Psoas muscle (tissue), 8 donors: ENCODE measurements at regions of chr6 and their contacts with region 1.

Region 1: DNA sequence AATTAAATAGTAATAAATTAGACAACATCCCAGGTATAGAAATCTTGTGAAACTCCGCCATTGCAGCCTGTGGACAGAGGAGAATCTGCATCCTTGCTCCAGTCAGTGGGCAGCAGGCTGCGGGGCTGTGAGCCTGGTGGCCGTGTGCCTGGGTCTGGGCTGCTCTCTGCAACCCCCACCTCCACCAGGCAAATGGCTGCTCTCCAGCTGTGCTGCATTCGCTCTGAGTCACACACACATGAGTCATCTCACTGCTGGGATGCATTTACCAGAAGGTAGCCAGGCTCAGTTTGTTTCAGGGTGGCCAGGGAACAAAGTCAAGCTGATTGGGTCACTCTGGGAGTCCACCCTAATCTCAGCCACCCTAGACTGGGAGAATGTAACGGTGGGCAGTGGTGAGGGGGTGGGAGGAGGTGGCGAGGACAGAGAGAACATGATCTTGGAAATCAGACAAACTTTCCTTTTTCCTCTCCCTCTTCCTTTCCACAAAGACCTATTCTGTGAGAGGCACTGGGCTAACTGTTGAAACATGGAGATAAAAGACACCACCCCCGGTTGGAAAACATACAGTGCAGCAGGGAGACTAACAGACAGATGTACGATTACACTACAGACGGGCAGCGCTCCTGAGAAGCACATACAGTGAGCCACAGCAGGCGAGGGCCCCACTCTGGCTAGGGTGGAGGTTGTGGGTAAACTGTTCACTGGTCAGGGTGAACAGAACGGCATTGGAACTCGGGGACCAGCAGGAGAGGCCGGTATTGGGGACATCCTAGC is 59.2 kb downstream of the TRAM2 start:
- DNase-seq: peak; percentile 86 to 90
- ATAC-seq: peak; percentile 96 to 98 (median 97)
- H3K4me3 ChIP-seq: no peak overlapping the region
- H3K27ac ChIP-seq: peak overlapping the region; percentile 86
- H3K4me1 ChIP-seq: peaks cover 27% of the 10 kb centered on the region
- H3K27me3 ChIP-seq: no peaks in the 10 kb centered on the region
- CTCF ChIP-seq: no peak

Region 2: GRCh38 chr6:52474173-52474572 is 43.5 kb before region 1 on chr6:
- intact Hi-C with region 1: no loop called
- DNase-seq: no peak
- ATAC-seq: no peak
- H3K4me3 ChIP-seq: no peak overlapping the region
- H3K27ac ChIP-seq: no peak overlapping the region
- H3K4me1 ChIP-seq: no peaks in the 10 kb centered on the region
- H3K27me3 ChIP-seq: no peaks in the 10 kb centered on the region
- CTCF ChIP-seq: no peak

Region 3: DNA sequence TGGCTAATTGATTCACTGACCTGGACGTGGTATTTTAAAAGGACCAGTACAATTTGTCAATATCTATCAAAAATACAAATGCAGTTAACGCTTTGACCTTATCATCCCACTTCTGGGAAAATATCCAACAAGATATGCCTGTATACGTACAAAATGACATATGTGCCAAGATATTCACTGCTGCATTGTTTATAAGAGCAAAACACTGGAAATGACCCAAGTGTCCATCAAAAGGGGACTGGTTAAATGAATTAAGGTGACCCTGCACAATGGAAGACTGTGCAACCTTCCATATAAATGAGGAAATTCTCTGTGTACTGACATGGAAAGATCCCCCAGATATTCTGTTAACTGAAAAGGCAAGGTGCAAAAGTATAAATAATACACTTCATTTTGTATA is 45.2 kb after region 1 on chr6:
- intact Hi-C with region 1: no loop called
- DNase-seq: no peak
- ATAC-seq: no peak
- H3K4me3 ChIP-seq: no peak overlapping the region
- H3K27ac ChIP-seq: no peak overlapping the region
- H3K4me1 ChIP-seq: peaks cover 21% of the 10 kb centered on the region
- H3K27me3 ChIP-seq: no peaks in the 10 kb centered on the region
- CTCF ChIP-seq: no peak

Region 4: GRCh38 chr6:52577022-52577777 is 59.5 kb after region 1 on chr6 and contains the start of gene TRAM2:
- intact Hi-C with region 1: loop called (anchors 5 kb)
- DNase-seq: peak; percentile 92
- ATAC-seq: peak; percentile 92 to 95 (median 94)
- H3K4me3 ChIP-seq: peak within 1 kb of the TSS; percentile 98
- H3K27ac ChIP-seq: peak within 1 kb of the TSS; percentile 98
- H3K4me1 ChIP-seq: peaks cover 19% of the 10 kb centered on the region
- H3K27me3 ChIP-seq: no peaks in the 10 kb centered on the region
- CTCF ChIP-seq: peak; percentile 26
- total RNA-seq, gene TRAM2: 3.4 to 5.7 (median 4.5) TPM